ENCODE measurements at regions of chr2 and their contacts with region 1.

Region 1: DNA sequence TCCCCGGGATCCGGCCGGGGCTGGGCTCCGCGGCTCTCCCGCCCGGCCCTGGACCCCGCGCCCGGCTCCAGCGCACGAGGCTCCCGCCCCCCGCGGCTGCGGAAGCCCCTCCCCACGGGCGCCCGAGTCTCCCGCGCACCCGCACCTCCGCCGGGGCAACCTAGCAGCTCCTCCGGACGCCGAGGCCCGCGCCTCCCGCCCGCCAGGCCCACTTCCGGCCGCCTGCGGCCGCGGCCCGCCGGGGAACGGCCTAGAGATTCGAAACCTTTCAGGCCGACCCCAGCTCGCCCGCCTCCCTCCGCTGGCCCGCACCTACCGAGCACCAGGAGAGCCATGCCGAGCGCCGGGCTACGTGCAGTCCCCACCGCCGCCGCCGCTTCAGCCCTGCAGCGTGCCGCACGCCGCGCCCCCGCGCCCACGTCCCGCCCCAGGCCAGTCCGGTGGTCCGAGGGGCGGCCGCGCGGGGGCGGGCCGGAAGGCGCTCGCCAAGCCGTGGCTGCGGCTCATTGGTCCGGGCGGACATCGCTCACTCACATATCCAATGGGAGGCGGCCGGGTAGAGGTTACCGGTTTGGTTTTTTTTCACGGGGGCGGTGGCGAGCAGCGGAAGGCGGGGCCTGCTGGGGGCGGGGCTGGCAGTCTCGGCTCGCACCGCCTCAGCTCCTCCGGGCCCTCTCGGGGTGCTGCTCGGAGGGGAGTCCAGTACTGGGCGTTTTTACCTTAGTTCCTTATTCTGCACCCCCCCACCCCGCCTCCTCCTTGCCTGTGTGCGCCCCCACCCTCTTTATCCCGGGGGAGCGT is at the start of gene PDIA6:
- DNase-seq: peak; percentile 87 to 96 (median 90)
- ATAC-seq: peak; percentile 95
- H3K4me3 ChIP-seq: peak within 1 kb of the TSS; percentile 73
- H3K4me3 Mint-ChIP-seq: peak within 1 kb of the TSS; percentile 87 to 95 (median 91)
- H3K27ac ChIP-seq: peak within 1 kb of the TSS; percentile 86
- H3K27ac Mint-ChIP-seq: peak within 1 kb of the TSS; percentile 77 to 96 (median 84)
- H3K4me1 ChIP-seq: peaks cover 14 to 15% of the 10 kb centered on the region in 2 donors
- H3K4me1 Mint-ChIP-seq: peaks cover 28 to 44% (median 39%) of the 10 kb centered on the region in 7 donors
- H3K27me3 ChIP-seq: no peaks in the 10 kb centered on the region
- H3K27me3 Mint-ChIP-seq: peaks cover 0 to 15% (median 0%) of the 10 kb centered on the region in 5 donors
- total RNA-seq, gene PDIA6: 24.3 to 173 (median 46.8) TPM

Region 2: GRCh38 chr2:9423100-9423921 is 1389.3 kb before region 1 on chr2 and contains the starts of genes CPSF3 and ITGB1BP1:
- CTCF ChIA-PET with region 1: no interaction called
- POLR2A ChIA-PET with region 1: no interaction called
- intact Hi-C with region 1: loop called in 1 of 2 experiments (anchors 5 kb)
- DNase-seq: peak; percentile 88 to 98 (median 94)
- ATAC-seq: peak; percentile 92
- H3K4me3 ChIP-seq: peak within 1 kb of the TSS; percentile 90
- H3K4me3 Mint-ChIP-seq: peak within 1 kb of the TSS in 5 of 10 donors; percentile 87 to 95 (median 92)
- H3K27ac ChIP-seq: peak within 1 kb of the TSS; percentile 84
- H3K27ac Mint-ChIP-seq: peak within 1 kb of the TSS in 8 of 9 donors; percentile 82 to 97 (median 92)
- H3K4me1 ChIP-seq: peaks cover 22 to 24% of the 10 kb centered on the region in 2 donors
- H3K4me1 Mint-ChIP-seq: peaks cover 20 to 41% (median 28%) of the 10 kb centered on the region in 7 donors
- H3K27me3 ChIP-seq: no peaks in the 10 kb centered on the region
- H3K27me3 Mint-ChIP-seq: no peaks in the 10 kb centered on the region
- total RNA-seq, gene CPSF3: 18.0 to 47.8 (median 21.7) TPM
- total RNA-seq, gene ITGB1BP1: 45.1 to 107 (median 54.3) TPM

Region 3: GRCh38 chr2:10717613-10718012 is 94.9 kb before region 1 on chr2:
- CTCF ChIA-PET with region 1: no interaction called
- POLR2A ChIA-PET with region 1: no interaction called
- intact Hi-C with region 1: no loop called
- DNase-seq: no peak
- ATAC-seq: no peak
- H3K4me3 ChIP-seq: no peak overlapping the region
- H3K4me3 Mint-ChIP-seq: no peak overlapping the region
- H3K27ac ChIP-seq: no peak overlapping the region
- H3K27ac Mint-ChIP-seq: no peak overlapping the region
- H3K4me1 ChIP-seq: no peaks in the 10 kb centered on the region
- H3K4me1 Mint-ChIP-seq: peaks cover 0 to 16% (median 5%) of the 10 kb centered on the region in 7 donors
- H3K27me3 ChIP-seq: peaks cover 5 to 9% of the 10 kb centered on the region in 2 donors
- H3K27me3 Mint-ChIP-seq: peaks cover 15 to 63% (median 25%) of the 10 kb centered on the region in 5 donors

Region 4: GRCh38 chr2:10832203-10832936 is 19.8 kb after region 1 on chr2:
- CTCF ChIA-PET with region 1: interaction called, 5 read pairs
- POLR2A ChIA-PET with region 1: no interaction called
- intact Hi-C with region 1: loop called (anchors 1 kb)
- DNase-seq: peak; percentile 66 to 85 (median 75)
- ATAC-seq: peak; percentile 94
- H3K4me3 ChIP-seq: no peak overlapping the region
- H3K4me3 Mint-ChIP-seq: peak overlapping the region in 8 of 10 donors; percentile 33 to 76 (median 48)
- H3K27ac ChIP-seq: no peak overlapping the region
- H3K27ac Mint-ChIP-seq: peak overlapping the region in 1 of 9 donors; percentile 56
- H3K4me1 ChIP-seq: peaks cover 0 to 2% of the 10 kb centered on the region in 2 donors
- H3K4me1 Mint-ChIP-seq: peaks cover 0 to 16% (median 5%) of the 10 kb centered on the region in 7 donors
- H3K27me3 ChIP-seq: no peaks in the 10 kb centered on the region
- H3K27me3 Mint-ChIP-seq: peaks cover 0 to 29% (median 13%) of the 10 kb centered on the region in 5 donors

Region 5: DNA sequence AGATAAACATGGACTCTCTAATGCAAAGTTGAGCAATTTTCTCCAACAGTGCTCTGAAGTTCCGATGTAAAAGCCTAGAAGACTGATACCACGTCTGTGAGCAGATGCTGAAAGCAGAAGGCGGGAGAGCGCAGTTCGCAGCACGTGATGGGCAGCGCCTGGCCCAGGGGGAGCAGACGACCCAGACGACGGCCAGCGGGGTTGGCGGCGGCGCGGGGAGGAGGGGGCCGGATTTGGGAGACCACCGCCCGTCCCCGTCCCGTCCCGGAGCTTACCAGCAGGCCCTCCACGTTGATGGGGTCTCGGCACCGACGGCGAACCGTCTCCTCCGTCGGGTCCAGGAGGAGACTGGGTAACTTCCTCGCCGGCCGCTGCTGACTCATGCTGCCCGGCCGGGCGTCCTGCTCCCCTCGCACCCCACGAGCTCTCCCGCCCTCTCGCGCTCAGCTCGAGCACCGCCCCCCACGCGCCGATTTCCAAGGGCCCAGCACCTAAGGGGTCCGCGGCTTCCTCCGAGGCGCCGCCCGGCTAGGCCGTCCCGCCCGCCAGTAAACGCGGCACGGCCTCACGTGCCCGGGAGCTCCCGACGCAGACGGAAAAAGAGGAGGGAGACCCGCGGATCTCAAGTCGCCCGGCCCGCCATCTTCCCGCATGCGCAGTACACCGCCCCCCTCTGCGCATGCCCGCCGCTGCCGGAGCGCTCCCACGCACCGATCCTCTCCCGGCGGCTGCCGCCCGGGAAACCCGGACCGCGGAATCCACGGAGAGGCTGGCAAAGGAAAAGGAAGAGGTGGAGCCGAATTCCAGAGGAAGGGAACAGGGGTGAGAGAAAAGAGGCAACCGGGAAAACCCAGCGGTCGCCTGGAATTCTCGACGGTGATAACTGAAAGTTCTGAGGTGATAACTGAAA is 653.2 kb after region 1 on chr2 and contains the start of gene E2F6:
- CTCF ChIA-PET with region 1: no interaction called
- POLR2A ChIA-PET with region 1: interaction called, 4 read pairs
- intact Hi-C with region 1: loop called (anchors 1 kb)
- DNase-seq: peak; percentile 80 to 94 (median 87)
- ATAC-seq: peak; percentile 83
- H3K4me3 ChIP-seq: peak within 1 kb of the TSS; percentile 69
- H3K4me3 Mint-ChIP-seq: peak within 1 kb of the TSS; percentile 91 to 99 (median 98)
- H3K27ac ChIP-seq: peak within 1 kb of the TSS; percentile 73
- H3K27ac Mint-ChIP-seq: peak within 1 kb of the TSS; percentile 87 to 97 (median 93)
- H3K4me1 ChIP-seq: peaks cover 5 to 8% of the 10 kb centered on the region in 2 donors
- H3K4me1 Mint-ChIP-seq: peaks cover 27 to 49% (median 39%) of the 10 kb centered on the region in 7 donors
- H3K27me3 ChIP-seq: no peaks in the 10 kb centered on the region
- H3K27me3 Mint-ChIP-seq: peaks cover 0 to 2% (median 0%) of the 10 kb centered on the region in 5 donors
- total RNA-seq, gene E2F6: 6.2 to 11.6 (median 9.2) TPM

Region 6: GRCh38 chr2:11753886-11754699 is 941.5 kb after region 1 on chr2:
- CTCF ChIA-PET with region 1: no interaction called
- POLR2A ChIA-PET with region 1: no interaction called
- intact Hi-C with region 1: loop called in 1 of 2 experiments (anchors 10 kb)
- DNase-seq: peak in 7 of 9 donors; percentile 27 to 69 (median 36)
- ATAC-seq: peak; percentile 62
- H3K4me3 ChIP-seq: peak overlapping the region; percentile 37
- H3K4me3 Mint-ChIP-seq: peak overlapping the region; percentile 79 to 93 (median 82)
- H3K27ac ChIP-seq: peak overlapping the region; percentile 66
- H3K27ac Mint-ChIP-seq: peak overlapping the region; percentile 84 to 97 (median 94)
- H3K4me1 ChIP-seq: peaks cover 56 to 64% of the 10 kb centered on the region in 2 donors
- H3K4me1 Mint-ChIP-seq: peaks cover 58 to 93% (median 84%) of the 10 kb centered on the region in 7 donors
- H3K27me3 ChIP-seq: no peaks in the 10 kb centered on the region
- H3K27me3 Mint-ChIP-seq: no peaks in the 10 kb centered on the region

Measured in naive thymus-derived CD4-positive, alpha-beta T cell (primary cell).